Activated CD4-positive, alpha-beta T cell treated with anti-CD3 and anti-CD28 coated beads for 36 hours (primary cell): ENCODE measurements at regions of chr12 and their contacts with region 1.

Region 1: DNA sequence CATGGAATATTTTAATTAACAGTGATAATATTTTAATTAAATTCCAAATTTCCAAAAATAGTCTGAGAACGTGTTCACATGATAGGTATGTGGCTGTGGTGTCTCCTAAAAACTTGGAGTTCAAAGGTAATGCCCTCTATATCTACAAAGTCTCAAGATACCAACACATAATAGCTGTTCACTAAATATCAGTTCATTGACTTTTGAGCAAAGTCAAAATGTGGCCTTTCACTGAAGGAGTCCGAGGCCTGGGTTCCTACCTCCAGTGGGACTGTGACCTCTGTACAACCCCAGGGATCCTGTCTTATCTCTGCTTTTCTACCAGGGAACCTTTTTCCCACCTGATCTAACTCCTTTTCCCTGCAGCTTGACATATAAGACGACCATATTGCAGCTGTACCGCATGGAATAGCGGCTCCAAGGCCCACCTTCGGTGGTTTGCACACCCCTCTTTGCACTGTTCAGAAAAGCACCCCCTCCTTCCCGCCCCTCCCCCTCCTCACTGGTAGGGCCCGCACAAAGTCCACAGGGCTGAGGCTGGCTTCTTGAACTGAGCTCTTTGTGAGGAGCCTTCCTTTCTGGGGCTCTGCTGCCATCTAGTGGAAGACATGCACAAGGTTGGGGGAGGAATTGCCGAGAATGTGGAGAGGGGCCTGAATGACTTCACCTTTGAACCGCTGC is 3.1 kb downstream of the CCND2 start:
- DNase-seq: peak; percentile 93
- ATAC-seq: peak; percentile 39
- H3K4me3 Mint-ChIP-seq: peak overlapping the region; percentile 95
- H3K27ac Mint-ChIP-seq: peak overlapping the region; percentile 99
- H3K4me1 Mint-ChIP-seq: peaks cover 62% of the 10 kb centered on the region
- H3K27me3 Mint-ChIP-seq: no peaks in the 10 kb centered on the region

Region 2: GRCh38 chr12:3872800-3873636 is 403.6 kb before region 1 on chr12 and contains the start of gene PARP11:
- CTCF ChIA-PET with region 1: interaction called, 16 read pairs
- POLR2A ChIA-PET with region 1: interaction called, 5 read pairs
- intact Hi-C with region 1: loop called in 1 of 2 experiments (anchors 2 kb)
- DNase-seq: peak; percentile 99
- ATAC-seq: peak; percentile 93
- H3K4me3 Mint-ChIP-seq: peak within 1 kb of the TSS; percentile 96
- H3K27ac Mint-ChIP-seq: peak within 1 kb of the TSS; percentile 98
- H3K4me1 Mint-ChIP-seq: peaks cover 46% of the 10 kb centered on the region
- H3K27me3 Mint-ChIP-seq: no peaks in the 10 kb centered on the region
- total RNA-seq, gene PARP11: 20.9 to 23.0 TPM

Region 3: GRCh38 chr12:3988519-3989448 is 287.9 kb before region 1 on chr12:
- CTCF ChIA-PET with region 1: interaction called, 37 read pairs
- POLR2A ChIA-PET with region 1: interaction called, 3 read pairs
- intact Hi-C with region 1: no loop called
- DNase-seq: peak; percentile 60
- ATAC-seq: peak; percentile 71
- H3K4me3 Mint-ChIP-seq: peak overlapping the region; percentile 11
- H3K27ac Mint-ChIP-seq: peak overlapping the region; percentile 76
- H3K4me1 Mint-ChIP-seq: peaks cover 35% of the 10 kb centered on the region
- H3K27me3 Mint-ChIP-seq: no peaks in the 10 kb centered on the region

Region 4: GRCh38 chr12:4107436-4107878 is 169.2 kb before region 1 on chr12:
- CTCF ChIA-PET with region 1: interaction called, 51 read pairs
- POLR2A ChIA-PET with region 1: interaction called, 11 read pairs
- intact Hi-C with region 1: loop called (anchors 1 kb)
- DNase-seq: peak; percentile 79
- ATAC-seq: peak; percentile 92
- H3K4me3 Mint-ChIP-seq: peak overlapping the region; percentile 15
- H3K27ac Mint-ChIP-seq: peak overlapping the region; percentile 73
- H3K4me1 Mint-ChIP-seq: peaks cover 36% of the 10 kb centered on the region
- H3K27me3 Mint-ChIP-seq: peaks cover 11% of the 10 kb centered on the region

Region 5: GRCh38 chr12:4148418-4149056 is 128.1 kb before region 1 on chr12:
- CTCF ChIA-PET with region 1: interaction called, 33 read pairs
- POLR2A ChIA-PET with region 1: interaction called, 22 read pairs
- intact Hi-C with region 1: loop called in 1 of 2 experiments (anchors 1 kb)
- DNase-seq: peak; percentile 75
- ATAC-seq: no peak
- H3K4me3 Mint-ChIP-seq: no peak overlapping the region
- H3K27ac Mint-ChIP-seq: peak overlapping the region; percentile 94
- H3K4me1 Mint-ChIP-seq: peaks cover 87% of the 10 kb centered on the region
- H3K27me3 Mint-ChIP-seq: no peaks in the 10 kb centered on the region

Region 6: GRCh38 chr12:4261655-4262054 is 15.0 kb before region 1 on chr12:
- CTCF ChIA-PET with region 1: interaction called, 20 read pairs
- POLR2A ChIA-PET with region 1: no interaction called
- intact Hi-C with region 1: no loop called
- DNase-seq: no peak
- ATAC-seq: peak; percentile 77
- H3K4me3 Mint-ChIP-seq: no peak overlapping the region
- H3K27ac Mint-ChIP-seq: peak overlapping the region; percentile 43
- H3K4me1 Mint-ChIP-seq: peaks cover 11% of the 10 kb centered on the region
- H3K27me3 Mint-ChIP-seq: no peaks in the 10 kb centered on the region